Posterior cingulate gyrus (tissue), 11 donors: ENCODE measurements at regions of chr22 and their contacts with region 1.

Region 1: DNA sequence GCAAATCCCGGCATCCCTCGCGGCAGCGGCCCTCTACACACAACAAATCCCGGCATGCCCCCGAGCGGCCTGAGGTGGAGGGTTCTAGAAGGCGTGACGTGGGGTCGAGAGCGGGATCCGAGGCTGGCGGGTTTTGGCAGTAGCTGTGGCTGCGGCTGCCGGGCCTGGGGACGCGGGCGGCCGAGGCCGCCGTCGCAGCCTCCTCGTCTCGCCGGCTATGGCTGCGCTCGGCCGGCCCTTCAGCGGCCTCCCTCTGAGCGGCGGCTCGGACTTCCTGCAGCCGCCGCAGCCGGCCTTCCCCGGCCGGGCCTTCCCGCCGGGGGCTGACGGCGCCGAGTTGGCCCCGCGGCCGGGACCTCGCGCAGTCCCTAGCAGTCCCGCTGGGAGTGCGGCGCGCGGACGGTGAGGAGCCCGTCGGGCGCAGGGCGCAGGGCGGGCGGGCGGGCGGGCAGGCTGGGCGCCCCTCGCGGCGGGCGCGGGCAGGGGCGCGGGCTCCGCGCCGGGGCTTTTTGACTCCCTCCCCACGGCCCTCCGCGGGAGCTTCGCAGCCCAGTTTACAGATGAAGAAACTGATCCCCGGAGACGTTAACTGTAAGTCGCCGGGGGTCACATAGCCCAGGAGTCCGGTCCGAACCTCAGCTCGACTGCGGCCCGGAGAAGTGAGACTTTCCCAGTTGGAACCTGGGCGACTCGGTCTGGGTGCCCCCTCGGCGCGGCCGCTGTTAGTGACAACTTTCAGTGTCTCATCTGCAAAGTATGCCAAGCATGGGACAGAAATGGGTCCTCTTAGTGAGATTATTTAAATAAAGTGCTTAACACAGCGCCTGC is at the start of gene CCDC117:
- DNase-seq: peak; percentile 95 to 99 (median 96)

Region 2: GRCh38 chr22:28741758-28742561 is 30.9 kb before region 1 on chr22 and contains the starts of genes CHEK2 and HSCB:
- intact Hi-C with region 1: loop called (anchors 1 kb)
- DNase-seq: peak; percentile 95 to 100 (median 98)

Region 3: GRCh38 chr22:28810821-28811491 is 38.1 kb after region 1 on chr22:
- intact Hi-C with region 1: no loop called
- DNase-seq: no peak

Region 4: DNA sequence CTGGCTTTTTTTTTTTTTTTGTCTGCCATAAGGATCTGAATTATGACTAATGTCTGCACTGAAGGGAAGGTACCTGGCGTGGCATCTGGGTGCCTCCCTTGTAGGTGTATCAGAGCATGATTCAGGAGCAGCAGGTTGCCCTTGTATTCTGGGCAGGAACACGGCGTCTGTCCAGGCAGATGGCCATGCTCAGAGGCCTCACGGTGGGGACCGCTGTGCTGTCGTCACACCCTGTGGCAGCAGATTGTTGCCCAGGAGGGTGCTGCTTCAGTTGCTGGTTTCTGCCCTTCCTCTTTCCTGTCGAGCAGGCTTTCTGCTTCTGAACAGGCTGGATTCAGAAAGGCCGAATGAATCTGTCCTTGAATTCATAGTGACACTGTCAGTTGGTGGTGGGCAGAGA is 121.5 kb after region 1 on chr22:
- intact Hi-C with region 1: no loop called
- DNase-seq: peak in 3 of 10 donors; percentile 34 to 79 (median 72)